ENCODE measurements at regions of chr19 and their contacts with region 1.

Region 1: GRCh38 chr19:49391581-49392399 is 3.7 kb downstream of the KASH5 start:
- DNase-seq: peak; percentile 89
- H3K4me3 ChIP-seq: no peak overlapping the region
- H3K27ac ChIP-seq: no peak overlapping the region
- H3K4me1 ChIP-seq: no peaks in the 10 kb centered on the region
- H3K27me3 ChIP-seq: no peaks in the 10 kb centered on the region
- CTCF ChIP-seq: peak; percentile 98

Region 2: DNA sequence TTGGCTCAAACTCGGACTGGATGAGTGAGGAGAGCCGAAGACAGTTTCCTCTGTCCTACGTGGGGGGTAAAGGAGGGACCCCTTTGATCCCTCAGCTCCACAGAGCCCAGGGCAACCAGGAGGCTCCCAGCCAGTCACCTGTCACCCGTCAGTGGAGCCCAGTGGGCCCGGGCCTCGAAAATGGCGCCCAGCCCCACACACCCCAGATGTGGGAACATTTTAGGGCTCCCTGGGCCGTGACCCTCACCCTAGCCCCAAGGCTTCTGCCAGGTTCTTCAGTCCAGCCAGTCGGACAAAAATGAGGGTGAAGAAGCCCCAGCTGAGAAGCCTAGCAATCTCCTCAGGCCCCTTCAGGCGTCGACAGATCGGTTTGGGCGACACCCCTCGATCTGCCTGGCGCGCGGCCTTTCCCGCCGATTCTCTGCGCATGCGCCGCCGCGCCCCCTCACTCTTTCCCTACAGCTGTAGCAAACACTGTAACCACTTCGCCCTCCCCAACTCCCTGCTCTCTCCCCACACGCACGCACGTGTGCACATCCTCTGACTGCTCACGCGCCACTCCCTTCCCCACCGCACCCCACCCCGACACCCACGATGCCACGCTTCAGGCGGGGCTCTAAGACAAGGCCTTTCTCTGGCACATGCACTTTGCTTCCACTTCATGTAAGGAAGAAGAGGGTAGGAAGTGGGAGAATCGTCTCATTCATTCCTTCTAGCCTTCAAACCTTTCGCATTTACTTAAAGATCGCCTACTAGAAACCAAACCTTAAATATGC is 66.8 kb before region 1 on chr19 and contains the start of gene SLC6A16:
- CTCF ChIA-PET with region 1: no interaction called
- POLR2A ChIA-PET with region 1: no interaction called
- intact Hi-C with region 1: no loop called
- DNase-seq: no peak
- H3K4me3 ChIP-seq: no peak within 1 kb of the TSS
- H3K27ac ChIP-seq: no peak within 1 kb of the TSS
- H3K4me1 ChIP-seq: no peaks in the 10 kb centered on the region
- H3K27me3 ChIP-seq: no peaks in the 10 kb centered on the region
- CTCF ChIP-seq: no peak
- total RNA-seq, gene SLC6A16: 3.7 and 4.4 TPM in 2 replicates

Region 3: GRCh38 chr19:49475995-49476880 is 84.4 kb after region 1 on chr19:
- CTCF ChIA-PET with region 1: interaction called, 11 read pairs
- POLR2A ChIA-PET with region 1: no interaction called
- intact Hi-C with region 1: no loop called
- DNase-seq: peak; percentile 83
- H3K4me3 ChIP-seq: no peak overlapping the region
- H3K27ac ChIP-seq: no peak overlapping the region
- H3K4me1 ChIP-seq: peaks cover 10% of the 10 kb centered on the region
- H3K27me3 ChIP-seq: no peaks in the 10 kb centered on the region
- CTCF ChIP-seq: peak; percentile 83

Measured in A673 (cell line).